ENCODE measurements at regions of chr16 and their contacts with region 1.

Region 1: GRCh38 chr16:70380861-70381603 is 34.3 kb downstream of the DDX19A start:
- DNase-seq: peak; percentile 92
- ATAC-seq: peak; percentile 92
- H3K4me3 Mint-ChIP-seq: peak overlapping the region; percentile 96
- H3K27ac Mint-ChIP-seq: peak overlapping the region; percentile 99
- H3K4me1 Mint-ChIP-seq: peaks cover 9% of the 10 kb centered on the region
- H3K27me3 Mint-ChIP-seq: no peaks in the 10 kb centered on the region

Region 2: GRCh38 chr16:70298988-70299938 is 81.8 kb before region 1 on chr16 and contains the start of gene DDX19B:
- POLR2A ChIA-PET with region 1: interaction called, 15 read pairs
- DNase-seq: peak; percentile 77
- ATAC-seq: peak; percentile 86
- H3K4me3 Mint-ChIP-seq: peak within 1 kb of the TSS; percentile 95
- H3K27ac Mint-ChIP-seq: peak within 1 kb of the TSS; percentile 84
- H3K4me1 Mint-ChIP-seq: peaks cover 23% of the 10 kb centered on the region
- H3K27me3 Mint-ChIP-seq: no peaks in the 10 kb centered on the region
- total RNA-seq, gene DDX19B: 29.8 to 32.3 TPM

Region 3: DNA sequence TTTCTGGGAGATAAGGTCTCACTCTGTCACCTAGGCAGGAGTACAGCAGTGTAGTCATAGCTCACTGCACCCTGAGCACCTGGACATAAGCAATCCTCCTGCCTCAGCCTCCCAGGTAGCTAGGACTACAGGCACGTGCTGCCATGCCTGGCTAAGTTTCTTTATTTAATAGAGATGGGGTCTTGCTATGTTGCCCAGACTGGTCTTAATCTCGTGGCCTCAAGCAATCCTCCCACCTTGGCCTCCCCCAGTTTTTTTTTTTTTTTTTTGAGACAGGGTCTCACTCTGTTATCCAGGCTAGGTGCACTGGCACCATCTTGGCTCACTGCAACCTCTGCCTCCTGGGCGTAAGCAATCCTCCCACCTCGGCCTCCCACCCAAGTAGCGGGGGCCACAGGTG is 60.9 kb before region 1 on chr16:
- POLR2A ChIA-PET with region 1: no interaction called
- DNase-seq: no peak
- ATAC-seq: no peak
- H3K4me3 Mint-ChIP-seq: no peak overlapping the region
- H3K27ac Mint-ChIP-seq: no peak overlapping the region
- H3K4me1 Mint-ChIP-seq: peaks cover 1% of the 10 kb centered on the region
- H3K27me3 Mint-ChIP-seq: no peaks in the 10 kb centered on the region

Region 4: GRCh38 chr16:70337814-70338213 is 43.2 kb before region 1 on chr16:
- POLR2A ChIA-PET with region 1: no interaction called
- DNase-seq: no peak
- ATAC-seq: no peak
- H3K4me3 Mint-ChIP-seq: no peak overlapping the region
- H3K27ac Mint-ChIP-seq: no peak overlapping the region
- H3K4me1 Mint-ChIP-seq: no peaks in the 10 kb centered on the region
- H3K27me3 Mint-ChIP-seq: no peaks in the 10 kb centered on the region

Region 5: GRCh38 chr16:70391881-70392481 is 10.9 kb after region 1 on chr16:
- POLR2A ChIA-PET with region 1: interaction called, 24 read pairs
- DNase-seq: no peak
- ATAC-seq: no peak
- H3K4me3 Mint-ChIP-seq: no peak overlapping the region
- H3K27ac Mint-ChIP-seq: no peak overlapping the region
- H3K4me1 Mint-ChIP-seq: peaks cover 9% of the 10 kb centered on the region
- H3K27me3 Mint-ChIP-seq: no peaks in the 10 kb centered on the region

Region 6: DNA sequence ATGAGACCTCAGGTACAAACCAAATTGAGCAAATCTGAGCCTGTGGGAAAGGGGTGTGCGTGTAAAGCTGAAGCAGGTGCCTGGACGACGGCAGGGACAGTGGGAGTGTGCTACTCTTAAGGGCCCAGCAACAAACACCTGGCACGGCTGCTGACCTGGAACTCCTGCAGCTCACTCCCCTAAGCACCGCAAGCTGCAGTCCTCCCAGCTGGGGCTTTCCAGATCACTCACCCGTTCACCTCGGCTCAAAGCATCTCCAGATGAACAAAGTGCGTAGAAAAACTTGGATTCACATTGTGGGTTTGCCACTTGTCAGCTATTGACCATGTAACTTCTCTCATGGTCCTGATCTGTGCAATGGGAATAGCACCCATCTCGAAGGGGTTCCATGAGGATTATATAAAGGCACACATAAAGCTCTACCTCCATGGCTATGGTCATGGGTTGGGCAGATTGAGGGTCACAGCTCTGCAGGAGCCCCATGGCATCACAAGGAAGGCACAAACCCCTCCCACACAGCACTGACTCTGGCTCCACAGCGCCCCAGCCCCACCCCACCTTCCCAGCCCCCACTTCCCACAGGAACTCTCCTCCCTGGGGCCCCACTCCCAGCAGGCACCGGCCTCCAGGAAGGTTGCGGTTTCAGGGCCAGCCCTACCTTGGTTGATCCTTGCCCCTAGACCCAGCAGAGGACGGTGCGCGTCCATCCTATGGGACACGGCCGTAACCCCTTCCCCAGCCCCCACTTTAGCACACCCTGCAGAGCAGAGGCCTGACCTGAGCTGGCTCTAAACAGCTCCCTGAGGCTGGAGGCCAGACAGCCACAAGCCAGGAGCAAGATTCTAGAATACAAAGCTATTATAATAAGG is 36.0 kb after region 1 on chr16:
- POLR2A ChIA-PET with region 1: interaction called, 17 read pairs
- DNase-seq: no peak
- ATAC-seq: no peak
- H3K4me3 Mint-ChIP-seq: peak overlapping the region; percentile 53
- H3K27ac Mint-ChIP-seq: peak overlapping the region; percentile 92
- H3K4me1 Mint-ChIP-seq: peaks cover 39% of the 10 kb centered on the region
- H3K27me3 Mint-ChIP-seq: no peaks in the 10 kb centered on the region

Region 7: GRCh38 chr16:70454222-70455034 is 73.4 kb after region 1 on chr16 and contains the start of gene FCSK:
- POLR2A ChIA-PET with region 1: interaction called, 35 read pairs
- DNase-seq: peak; percentile 83
- ATAC-seq: peak; percentile 91
- H3K4me3 Mint-ChIP-seq: peak within 1 kb of the TSS; percentile 89
- H3K27ac Mint-ChIP-seq: peak within 1 kb of the TSS; percentile 87
- H3K4me1 Mint-ChIP-seq: peaks cover 17% of the 10 kb centered on the region
- H3K27me3 Mint-ChIP-seq: no peaks in the 10 kb centered on the region
- total RNA-seq, gene FCSK: 24.3 to 26.0 TPM

Measured in activated naive CD8-positive, alpha-beta T cell treated with anti-CD3 and anti-CD28 coated beads, Interleukin-2, amount 10 ng/mL, durations not matched to agents 7 days and 5 days (primary cell).